CD4-positive, alpha-beta memory T cell (primary cell): ENCODE measurements at regions of chr11 and their contacts with region 1.

Region 1: DNA sequence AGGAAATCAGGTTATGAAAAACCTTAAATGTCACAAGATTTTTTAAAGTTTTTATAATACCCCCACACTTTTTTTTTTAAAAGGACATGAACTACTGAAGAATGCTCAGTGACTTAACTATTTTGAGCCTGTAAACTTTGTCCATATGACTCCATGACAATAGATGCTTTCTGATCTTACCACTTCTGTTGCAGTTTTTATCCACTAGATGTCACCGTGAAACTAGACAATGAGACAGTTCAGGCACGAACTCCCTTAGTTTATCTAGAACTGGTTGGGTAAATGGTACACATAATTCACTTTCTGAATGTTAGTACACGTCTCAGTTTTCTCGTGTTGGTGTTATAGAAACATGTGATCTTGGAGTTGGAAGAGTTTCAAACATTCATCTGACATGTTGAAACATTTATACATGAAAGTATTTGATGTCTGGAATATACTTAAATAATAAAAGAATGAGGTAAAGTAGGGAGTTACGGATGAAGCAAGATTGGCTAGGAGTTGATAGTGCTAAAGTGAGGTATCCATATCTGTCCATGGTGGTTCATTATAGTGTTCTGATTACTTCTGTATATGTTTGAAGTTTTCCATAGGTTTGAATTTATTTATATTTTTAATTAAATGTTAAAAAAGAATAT is 8.1 kb downstream of the CCDC15 start:
- DNase-seq: peak; percentile 41 to 71 (median 68)
- H3K4me3 ChIP-seq: no peak overlapping the region
- H3K4me3 Mint-ChIP-seq: no peak overlapping the region
- H3K27ac ChIP-seq: no peak overlapping the region
- H3K27ac Mint-ChIP-seq: no peak overlapping the region
- H3K4me1 ChIP-seq: no peaks in the 10 kb centered on the region
- H3K4me1 Mint-ChIP-seq: no peaks in the 10 kb centered on the region
- H3K27me3 ChIP-seq: no peaks in the 10 kb centered on the region
- H3K27me3 Mint-ChIP-seq: no peaks in the 10 kb centered on the region

Region 2: DNA sequence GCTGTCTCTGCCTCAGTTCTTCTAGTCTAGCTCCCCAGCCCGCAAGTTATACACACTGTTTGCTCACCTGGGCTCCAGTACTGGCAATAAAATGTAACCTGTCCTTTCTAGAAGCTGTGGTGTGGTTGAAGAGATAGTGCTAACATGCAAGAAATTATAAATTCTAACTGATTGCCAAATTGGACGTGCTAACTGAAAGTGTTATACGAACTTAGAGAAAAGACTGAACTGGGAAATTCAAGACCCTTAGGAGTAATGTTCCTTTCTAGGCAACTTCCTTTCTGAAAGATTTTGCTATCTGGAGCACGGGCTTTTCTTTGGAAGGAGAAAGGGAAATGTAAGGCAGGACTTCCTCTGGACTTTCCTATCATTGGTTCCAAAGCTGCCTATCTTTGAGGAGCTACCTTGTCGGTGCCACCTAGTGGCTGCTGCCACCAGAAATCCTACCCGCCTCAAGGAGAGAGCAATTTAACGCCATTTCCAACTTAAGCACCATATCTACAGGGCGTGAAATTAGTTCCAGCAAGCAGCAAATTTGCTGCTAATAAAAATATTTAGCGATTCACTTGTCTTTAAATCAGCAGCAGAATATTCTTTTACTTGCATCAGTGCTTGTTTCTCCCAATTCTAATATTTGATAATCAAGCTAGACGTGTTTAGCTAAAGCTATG is 162.0 kb after region 1 on chr11:
- CTCF ChIA-PET with region 1: interaction called, 4 read pairs
- POLR2A ChIA-PET with region 1: no interaction called
- intact Hi-C with region 1: loop called (anchors 1 kb)
- DNase-seq: peak; percentile 13 to 41 (median 24)
- H3K4me3 ChIP-seq: no peak overlapping the region
- H3K4me3 Mint-ChIP-seq: no peak overlapping the region
- H3K27ac ChIP-seq: no peak overlapping the region
- H3K27ac Mint-ChIP-seq: no peak overlapping the region
- H3K4me1 ChIP-seq: no peaks in the 10 kb centered on the region
- H3K4me1 Mint-ChIP-seq: peaks cover 0 to 7% (median 0%) of the 10 kb centered on the region in 4 donors
- H3K27me3 ChIP-seq: peaks cover 6% of the 10 kb centered on the region
- H3K27me3 Mint-ChIP-seq: peaks cover 17 to 20% of the 10 kb centered on the region in 2 donors

Region 3: DNA sequence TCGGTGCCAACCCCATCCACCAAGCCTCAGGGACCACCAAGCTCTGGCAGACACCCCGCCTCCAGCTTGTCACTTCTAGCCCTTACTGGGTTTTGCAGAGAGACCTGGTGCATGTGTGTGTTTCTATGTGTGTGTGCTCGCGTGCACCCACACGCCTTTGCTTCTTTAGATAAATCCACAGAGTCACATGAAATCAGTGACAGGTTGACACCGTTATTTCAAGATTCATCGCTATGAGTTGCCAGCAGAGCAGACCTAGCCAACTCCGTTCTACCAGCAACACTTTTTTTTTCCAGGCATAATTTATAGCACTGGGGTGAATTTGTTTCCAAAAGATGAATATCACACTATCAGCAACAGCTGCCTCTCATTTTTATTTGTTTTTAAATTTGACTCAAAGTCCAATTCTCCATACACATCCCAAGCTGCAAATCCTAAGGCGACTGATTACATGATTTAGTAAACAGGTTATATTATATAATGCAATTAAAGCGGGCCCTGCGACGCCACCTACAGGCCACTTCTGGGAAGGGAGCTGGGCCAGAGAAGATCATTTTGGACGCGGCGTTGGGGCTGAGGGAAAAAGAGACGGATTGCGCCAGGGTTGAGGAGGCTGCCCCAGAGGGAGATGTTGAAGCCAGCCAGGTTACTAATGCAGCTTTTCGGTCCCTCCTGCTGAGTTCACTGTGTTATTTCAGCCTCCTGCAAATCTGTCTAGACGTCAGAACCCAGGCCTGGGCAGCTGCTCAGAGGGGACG is 383.5 kb after region 1 on chr11:
- CTCF ChIA-PET with region 1: no interaction called
- POLR2A ChIA-PET with region 1: no interaction called
- intact Hi-C with region 1: loop called (anchors 1 kb)
- DNase-seq: peak in 4 of 5 donors; percentile 12 to 17 (median 15)
- H3K4me3 ChIP-seq: no peak overlapping the region
- H3K4me3 Mint-ChIP-seq: peak overlapping the region in 1 of 8 donors; percentile 57
- H3K27ac ChIP-seq: no peak overlapping the region
- H3K27ac Mint-ChIP-seq: peak overlapping the region in 2 of 7 donors; percentile 13 to 48
- H3K4me1 ChIP-seq: no peaks in the 10 kb centered on the region
- H3K4me1 Mint-ChIP-seq: peaks cover 0 to 5% (median 1%) of the 10 kb centered on the region in 4 donors
- H3K27me3 ChIP-seq: no peaks in the 10 kb centered on the region
- H3K27me3 Mint-ChIP-seq: peaks cover 3 to 17% of the 10 kb centered on the region in 2 donors

Region 4: DNA sequence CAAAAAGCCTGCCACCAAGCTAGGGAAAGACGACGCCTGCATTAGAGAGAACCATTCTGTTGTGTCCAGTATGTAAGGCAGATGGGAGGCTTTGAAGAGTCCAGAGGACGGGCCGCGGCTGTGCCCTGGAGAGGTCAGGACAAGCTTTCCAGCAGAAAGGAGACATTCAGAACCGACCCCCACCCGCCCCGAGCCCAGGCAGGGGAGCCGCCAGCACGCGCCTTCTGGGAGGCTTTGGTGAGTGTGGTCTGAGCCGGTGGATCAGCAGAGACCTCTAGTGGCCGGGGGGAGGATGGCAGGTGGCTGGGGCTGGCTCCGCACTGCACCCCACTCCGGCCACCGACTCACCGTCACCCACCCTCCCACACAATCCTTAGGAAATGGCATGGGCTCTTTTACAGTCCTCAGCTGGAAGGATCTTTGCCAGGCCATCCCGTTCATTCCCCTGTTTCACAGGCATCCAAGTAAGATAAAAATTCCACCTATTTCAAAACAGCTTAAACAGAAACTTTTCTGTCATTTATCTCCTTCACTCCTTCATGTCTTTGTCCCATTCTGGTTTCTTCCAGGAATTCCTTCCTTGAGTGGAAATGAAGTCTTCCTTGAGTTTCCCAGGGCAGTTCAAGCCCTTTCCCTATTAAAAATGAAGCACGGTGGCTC is 442.8 kb after region 1 on chr11:
- CTCF ChIA-PET with region 1: no interaction called
- POLR2A ChIA-PET with region 1: no interaction called
- intact Hi-C with region 1: loop called (anchors 1 kb)
- DNase-seq: peak in 4 of 5 donors; percentile 42 to 53 (median 48)
- H3K4me3 ChIP-seq: no peak overlapping the region
- H3K4me3 Mint-ChIP-seq: peak overlapping the region in 4 of 8 donors; percentile 4 to 52 (median 18)
- H3K27ac ChIP-seq: no peak overlapping the region
- H3K27ac Mint-ChIP-seq: no peak overlapping the region
- H3K4me1 ChIP-seq: peaks cover 6% of the 10 kb centered on the region
- H3K4me1 Mint-ChIP-seq: peaks cover 3 to 10% (median 8%) of the 10 kb centered on the region in 4 donors
- H3K27me3 ChIP-seq: peaks cover 14% of the 10 kb centered on the region
- H3K27me3 Mint-ChIP-seq: peaks cover 34 to 53% of the 10 kb centered on the region in 2 donors

Region 5: DNA sequence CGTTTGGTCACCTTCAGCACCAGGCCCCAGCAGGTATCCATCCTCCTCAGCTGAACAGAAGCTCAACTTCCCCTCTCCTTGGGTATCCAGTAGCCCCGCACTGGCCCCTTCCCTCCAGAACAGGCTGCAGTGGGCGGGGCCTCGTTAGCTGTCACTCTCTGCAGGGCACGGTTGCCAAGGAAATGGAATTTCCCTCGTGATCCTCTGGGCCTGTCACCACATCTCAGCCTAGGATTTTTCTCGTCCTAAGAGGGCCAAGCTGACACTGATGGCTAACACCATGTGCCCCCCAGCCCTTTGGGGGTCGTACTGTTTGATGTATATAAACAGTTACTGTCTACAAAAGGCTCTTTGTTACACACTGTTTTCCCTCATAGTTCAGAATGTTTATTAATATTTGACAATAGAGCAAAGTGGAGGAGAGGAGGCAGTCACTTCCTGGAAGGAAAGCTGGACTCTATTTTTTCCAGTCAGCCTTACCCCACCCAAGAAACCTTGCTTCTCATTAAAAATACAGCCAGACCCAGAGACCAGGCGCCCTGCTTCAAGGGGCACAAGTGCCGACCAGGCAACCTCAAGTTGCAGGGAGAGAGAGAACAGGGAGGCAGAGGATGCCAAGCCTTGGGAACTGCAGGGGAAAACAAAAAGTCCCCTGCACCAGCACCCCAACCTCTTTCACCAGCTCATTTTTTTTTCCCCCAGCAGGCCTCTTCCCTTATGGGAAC is 489.5 kb after region 1 on chr11:
- CTCF ChIA-PET with region 1: no interaction called
- POLR2A ChIA-PET with region 1: no interaction called
- intact Hi-C with region 1: loop called (anchors 5 kb)
- DNase-seq: no peak
- H3K4me3 ChIP-seq: no peak overlapping the region
- H3K4me3 Mint-ChIP-seq: peak overlapping the region in 1 of 8 donors; percentile 10
- H3K27ac ChIP-seq: no peak overlapping the region
- H3K27ac Mint-ChIP-seq: peak overlapping the region in 2 of 7 donors; percentile 2 to 61
- H3K4me1 ChIP-seq: no peaks in the 10 kb centered on the region
- H3K4me1 Mint-ChIP-seq: peaks cover 0 to 7% (median 2%) of the 10 kb centered on the region in 4 donors
- H3K27me3 ChIP-seq: no peaks in the 10 kb centered on the region
- H3K27me3 Mint-ChIP-seq: peaks cover 0 to 4% of the 10 kb centered on the region in 2 donors

Region 6: DNA sequence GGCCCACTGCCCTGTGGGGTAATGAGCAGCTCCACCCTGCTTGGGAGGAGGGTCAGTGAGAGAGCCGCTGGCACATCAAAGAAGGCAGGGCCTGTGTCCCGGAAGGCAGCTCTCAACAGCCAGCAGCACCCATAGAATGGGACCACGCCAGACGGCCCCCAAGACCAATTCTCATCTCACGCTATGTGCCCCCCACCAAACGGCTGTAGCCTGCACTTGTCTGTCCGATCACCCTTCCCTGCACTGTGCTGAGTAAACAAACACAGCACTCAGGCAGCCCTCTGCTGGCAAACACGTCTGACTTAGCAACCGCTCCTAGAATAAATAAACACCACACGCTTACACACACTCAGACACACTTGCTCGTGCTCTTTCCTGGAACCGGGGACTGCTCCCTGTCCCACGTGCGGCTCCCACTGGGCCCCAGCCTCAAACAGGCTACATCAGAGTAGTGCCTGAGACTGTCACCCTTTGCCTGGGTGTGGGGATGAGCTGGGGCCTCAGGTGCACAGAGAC is 1153.8 kb after region 1 on chr11:
- CTCF ChIA-PET with region 1: no interaction called
- POLR2A ChIA-PET with region 1: no interaction called
- intact Hi-C with region 1: no loop called
- DNase-seq: no peak
- H3K4me3 ChIP-seq: no peak overlapping the region
- H3K4me3 Mint-ChIP-seq: no peak overlapping the region
- H3K27ac ChIP-seq: no peak overlapping the region
- H3K27ac Mint-ChIP-seq: no peak overlapping the region
- H3K4me1 ChIP-seq: no peaks in the 10 kb centered on the region
- H3K4me1 Mint-ChIP-seq: no peaks in the 10 kb centered on the region
- H3K27me3 ChIP-seq: no peaks in the 10 kb centered on the region
- H3K27me3 Mint-ChIP-seq: peaks cover 0 to 3% of the 10 kb centered on the region in 2 donors